Calu3 (cell line): ENCODE measurements at regions of chr1 and their contacts with region 1.

Region 1: GRCh38 chr1:243255791-243256512 is at the start of gene SDCCAG8:
- DNase-seq: peak; percentile 98
- H3K4me3 Mint-ChIP-seq: peak within 1 kb of the TSS; percentile 90
- H3K27ac Mint-ChIP-seq: peak within 1 kb of the TSS; percentile 80
- H3K4me1 Mint-ChIP-seq: peaks cover 18% of the 10 kb centered on the region
- H3K27me3 Mint-ChIP-seq: no peaks in the 10 kb centered on the region
- CTCF ChIP-seq: no peak
- total RNA-seq, gene SDCCAG8: 52.0 and 67.3 TPM in 2 replicates

Region 2: DNA sequence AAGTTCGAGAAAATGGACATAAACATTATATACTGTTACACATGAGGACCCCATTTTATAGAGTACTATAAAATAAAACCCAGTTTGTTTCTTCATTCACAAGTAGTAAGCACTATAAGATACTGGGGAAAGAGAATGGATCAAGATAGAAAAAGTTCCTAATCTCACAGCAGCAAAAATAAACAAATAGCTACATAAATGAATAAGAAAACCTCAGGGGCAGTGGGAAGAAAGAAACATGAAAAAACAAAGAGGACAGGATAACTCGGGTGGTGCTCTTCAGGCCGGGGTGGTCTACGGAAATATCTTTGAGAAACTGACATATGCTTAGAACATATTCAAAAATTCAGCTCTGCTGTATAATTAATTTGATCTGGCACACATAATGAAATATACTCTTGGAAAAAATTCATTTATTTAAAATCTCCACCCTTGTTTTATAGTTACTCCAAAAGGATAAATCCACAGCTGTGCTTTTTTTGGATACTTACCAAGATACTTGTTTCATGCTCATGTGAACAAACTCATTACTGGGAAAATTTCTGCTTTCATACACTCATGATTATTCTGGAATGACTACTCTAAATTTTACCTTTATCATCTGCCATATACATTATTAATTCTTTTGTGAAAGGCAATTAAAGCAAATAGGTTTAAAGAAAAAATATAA is 20.8 kb before region 1 on chr1:
- CTCF ChIA-PET with region 1: interaction called, 4 read pairs
- intact Hi-C with region 1: loop called (anchors 2 kb)
- DNase-seq: no peak
- H3K4me3 Mint-ChIP-seq: no peak overlapping the region
- H3K27ac Mint-ChIP-seq: no peak overlapping the region
- H3K4me1 Mint-ChIP-seq: peaks cover 12% of the 10 kb centered on the region
- H3K27me3 Mint-ChIP-seq: no peaks in the 10 kb centered on the region
- CTCF ChIP-seq: no peak

Region 3: DNA sequence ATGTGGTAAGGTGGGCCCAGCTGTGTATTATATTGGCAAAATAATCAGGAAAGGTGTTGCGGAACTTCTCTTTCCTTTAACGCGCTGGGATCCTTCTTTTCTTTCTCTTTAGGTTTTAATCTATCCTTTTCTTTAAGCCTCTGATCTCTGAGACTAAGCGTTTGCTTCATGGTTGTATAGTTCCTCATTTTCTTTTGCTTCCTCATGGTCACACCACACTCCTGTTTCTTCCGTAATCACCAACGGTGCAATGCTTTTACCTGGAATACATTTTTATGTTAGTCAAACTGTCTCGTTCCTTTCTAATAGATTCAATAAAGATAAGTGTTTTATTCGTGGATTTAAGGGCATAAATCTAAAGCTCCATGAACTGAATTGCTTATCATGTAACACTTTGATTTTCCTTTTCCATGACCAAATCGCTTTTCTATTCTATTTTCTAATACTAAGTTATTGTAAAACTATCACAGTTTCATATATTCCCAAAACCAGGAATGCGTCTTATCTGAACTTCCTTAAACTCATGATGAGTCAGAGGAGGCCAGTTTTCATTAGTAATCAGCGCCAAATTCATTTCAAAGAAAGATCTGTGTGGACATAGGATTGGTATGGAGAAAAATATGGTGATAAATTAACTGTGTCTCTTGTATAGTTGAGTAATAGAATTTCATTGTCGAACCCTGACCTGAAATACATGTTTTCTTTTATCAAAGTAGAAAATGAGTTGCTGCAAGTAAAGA is 12.1 kb after region 1 on chr1:
- CTCF ChIA-PET with region 1: interaction called, 9 read pairs
- intact Hi-C with region 1: loop called (anchors 1 kb)
- DNase-seq: no peak
- H3K4me3 Mint-ChIP-seq: peak overlapping the region; percentile 54
- H3K27ac Mint-ChIP-seq: peak overlapping the region; percentile 95
- H3K4me1 Mint-ChIP-seq: peaks cover 65% of the 10 kb centered on the region
- H3K27me3 Mint-ChIP-seq: no peaks in the 10 kb centered on the region
- CTCF ChIP-seq: no peak

Region 4: DNA sequence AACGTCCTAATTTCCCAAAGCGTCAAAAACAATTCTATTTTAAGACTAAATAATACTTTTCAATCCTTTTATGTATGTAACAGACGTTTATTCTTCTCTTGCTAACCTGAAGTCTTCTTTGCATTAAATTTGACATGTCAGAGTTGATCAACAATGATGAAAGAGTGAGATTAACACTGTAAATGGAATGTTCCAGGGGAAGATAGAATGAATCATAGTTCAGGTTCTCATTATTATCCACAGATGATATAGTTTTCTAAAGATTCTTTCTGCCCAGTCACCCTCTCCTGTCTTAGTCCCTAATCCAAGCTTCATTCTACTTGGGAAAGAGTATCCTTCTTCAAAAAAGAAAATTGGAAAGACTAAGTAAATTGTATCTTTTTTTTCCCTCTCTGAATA is 38.8 kb after region 1 on chr1:
- CTCF ChIA-PET with region 1: interaction called, 3 read pairs
- intact Hi-C with region 1: loop called (anchors 5 kb)
- DNase-seq: no peak
- H3K4me3 Mint-ChIP-seq: peak overlapping the region; percentile 47
- H3K27ac Mint-ChIP-seq: peak overlapping the region; percentile 91
- H3K4me1 Mint-ChIP-seq: peaks cover 42% of the 10 kb centered on the region
- H3K27me3 Mint-ChIP-seq: no peaks in the 10 kb centered on the region
- CTCF ChIP-seq: no peak

Region 5: GRCh38 chr1:243325305-243325890 is 69.4 kb after region 1 on chr1:
- CTCF ChIA-PET with region 1: no interaction called
- intact Hi-C with region 1: loop called (anchors 5 kb)
- DNase-seq: peak; percentile 43
- H3K4me3 Mint-ChIP-seq: no peak overlapping the region
- H3K27ac Mint-ChIP-seq: no peak overlapping the region
- H3K4me1 Mint-ChIP-seq: peaks cover 9% of the 10 kb centered on the region
- H3K27me3 Mint-ChIP-seq: no peaks in the 10 kb centered on the region
- CTCF ChIP-seq: peak; percentile 81

Region 6: GRCh38 chr1:243390162-243390791 is 134.3 kb after region 1 on chr1:
- CTCF ChIA-PET with region 1: no interaction called
- intact Hi-C with region 1: loop called (anchors 10 kb)
- DNase-seq: no peak
- H3K4me3 Mint-ChIP-seq: no peak overlapping the region
- H3K27ac Mint-ChIP-seq: no peak overlapping the region
- H3K4me1 Mint-ChIP-seq: peaks cover 50% of the 10 kb centered on the region
- H3K27me3 Mint-ChIP-seq: no peaks in the 10 kb centered on the region
- CTCF ChIP-seq: no peak